Posterior cingulate gyrus (tissue), 11 donors: ENCODE measurements at regions of chr10 and their contacts with region 1.

Region 1: GRCh38 chr10:22316285-22317120 is at the start of gene COMMD3:
- DNase-seq: peak; percentile 79 to 97 (median 86)

Region 2: DNA sequence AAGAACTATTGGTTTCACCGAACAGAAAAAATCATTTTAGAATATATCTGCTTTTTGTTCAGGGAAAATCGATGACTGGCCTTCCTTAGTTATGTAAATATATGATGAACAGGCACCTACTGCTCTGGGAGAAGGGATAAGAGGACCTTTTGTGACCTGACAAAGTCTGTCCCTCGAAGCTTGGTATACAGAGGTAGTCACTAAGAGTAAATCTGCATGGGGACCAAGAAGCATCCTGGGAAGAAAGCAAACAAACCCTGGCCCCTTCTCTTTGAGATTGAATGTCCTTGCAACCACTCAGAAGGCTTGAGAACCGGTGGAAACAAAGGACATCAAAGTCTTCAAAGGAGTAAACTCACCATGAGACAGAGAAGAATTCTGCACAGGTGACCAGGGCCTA is 843.4 kb before region 1 on chr10:
- intact Hi-C with region 1: no loop called
- DNase-seq: no peak

Region 3: GRCh38 chr10:22003079-22003913 is 313.2 kb before region 1 on chr10 and contains the start of gene DNAJC1:
- intact Hi-C with region 1: loop called (anchors 5 kb)
- DNase-seq: peak; percentile 97 to 100 (median 98)

Region 4: GRCh38 chr10:22183771-22184461 is 132.6 kb before region 1 on chr10:
- intact Hi-C with region 1: no loop called
- DNase-seq: no peak

Region 5: DNA sequence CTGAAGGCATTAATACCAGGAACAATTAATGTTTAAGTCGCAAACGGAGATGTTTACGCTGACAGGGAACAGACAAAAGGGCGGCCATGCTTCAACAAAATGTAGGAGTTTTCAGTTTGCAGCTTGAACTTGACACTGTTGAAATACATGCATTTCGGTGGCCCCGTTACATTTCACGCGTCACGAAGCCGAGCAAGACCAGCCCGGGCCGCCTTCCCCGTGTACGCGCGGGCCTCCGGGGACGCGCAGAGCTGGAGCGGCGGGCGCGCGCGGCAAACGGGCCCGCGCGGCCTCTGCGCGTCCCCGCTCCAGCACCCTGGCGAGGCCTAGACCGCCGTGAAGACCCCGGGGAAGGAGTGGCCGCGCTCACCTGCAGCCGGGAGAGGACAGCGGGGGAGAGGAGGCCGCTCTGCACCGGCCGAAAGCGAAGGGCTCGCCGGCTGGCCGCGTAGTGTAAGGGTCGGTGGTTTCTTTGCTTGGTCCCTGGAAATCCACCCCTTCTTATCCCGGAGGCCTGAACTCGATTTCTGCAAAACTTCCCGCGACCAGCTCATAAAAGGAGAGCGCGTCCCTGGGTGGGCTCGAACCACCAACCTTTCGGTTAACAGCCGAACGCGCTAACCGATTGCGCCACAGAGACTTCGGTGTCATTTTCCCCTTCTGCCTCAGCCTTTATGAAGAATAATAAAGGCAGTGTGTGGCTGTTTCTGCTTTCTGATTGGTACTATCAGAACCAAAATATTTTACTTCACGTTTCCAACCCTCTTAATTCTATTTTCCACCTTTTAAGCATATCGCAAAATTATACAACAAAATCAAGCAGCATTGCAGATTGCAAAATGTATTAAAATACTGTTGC is 87.3 kb before region 1 on chr10:
- intact Hi-C with region 1: loop called (anchors 1 kb)
- DNase-seq: peak; percentile 79 to 97 (median 82)